CD8-positive, alpha-beta T cell (primary cell): ENCODE measurements at regions of chr7 and their contacts with region 1.

Region 1: DNA sequence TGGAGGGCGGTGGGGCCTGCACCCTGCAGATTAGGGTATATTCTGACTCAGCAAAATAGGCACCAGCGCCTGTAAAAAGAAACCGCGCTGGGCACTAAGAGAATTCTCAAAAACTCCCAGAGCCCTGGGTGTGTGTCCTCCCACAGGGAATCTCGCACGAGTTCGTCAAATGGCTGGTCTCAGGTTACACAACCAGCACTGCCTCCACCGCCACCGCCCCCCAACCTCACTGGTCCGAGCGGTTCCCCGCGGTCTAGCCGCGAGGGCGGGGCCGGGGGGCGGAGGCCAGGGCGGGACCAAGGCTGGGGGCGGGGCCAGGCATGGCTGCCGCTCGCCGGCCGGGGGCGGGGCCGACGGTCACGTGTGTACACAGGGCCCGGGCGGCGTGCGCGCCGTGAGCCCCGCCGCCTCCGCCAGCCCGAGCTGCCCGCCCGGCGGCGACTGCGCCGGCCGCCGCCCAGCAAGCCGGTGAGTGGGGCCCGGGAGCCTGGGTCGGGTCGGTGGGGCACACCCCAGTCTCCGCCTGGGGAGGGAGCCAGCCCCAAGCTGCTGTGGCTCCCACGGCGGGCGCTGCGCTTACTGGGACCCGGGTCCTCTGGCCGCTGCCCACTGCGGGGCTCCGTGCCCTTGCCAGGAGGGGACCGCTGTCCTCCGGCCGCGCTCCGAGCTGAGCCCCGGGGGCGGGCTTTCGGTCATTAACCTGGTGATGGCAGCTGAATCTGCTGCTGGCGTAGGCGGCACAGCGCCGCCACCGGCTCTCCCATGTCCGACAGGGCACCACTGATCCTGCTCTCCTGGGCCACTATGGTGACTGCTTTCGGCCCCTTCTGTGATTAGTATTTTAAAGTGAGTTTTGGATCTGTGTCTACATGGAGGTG is at the start of gene GPR146:
- DNase-seq: peak; percentile 76 to 97 (median 91)
- ATAC-seq: peak; percentile 88
- H3K4me3 ChIP-seq: peak within 1 kb of the TSS; percentile 57 to 71
- H3K4me3 Mint-ChIP-seq: peak within 1 kb of the TSS; percentile 84
- H3K27ac ChIP-seq: peak within 1 kb of the TSS; percentile 51 to 57
- H3K27ac Mint-ChIP-seq: peak within 1 kb of the TSS; percentile 52
- H3K4me1 ChIP-seq: peaks cover 53% of the 10 kb centered on the region
- H3K4me1 Mint-ChIP-seq: peaks cover 63% of the 10 kb centered on the region
- H3K27me3 ChIP-seq: no peaks in the 10 kb centered on the region
- H3K27me3 Mint-ChIP-seq: no peaks in the 10 kb centered on the region
- CTCF ChIP-seq: peak; percentile 60
- total RNA-seq, gene GPR146: 4.4 to 5.0 TPM

Region 2: DNA sequence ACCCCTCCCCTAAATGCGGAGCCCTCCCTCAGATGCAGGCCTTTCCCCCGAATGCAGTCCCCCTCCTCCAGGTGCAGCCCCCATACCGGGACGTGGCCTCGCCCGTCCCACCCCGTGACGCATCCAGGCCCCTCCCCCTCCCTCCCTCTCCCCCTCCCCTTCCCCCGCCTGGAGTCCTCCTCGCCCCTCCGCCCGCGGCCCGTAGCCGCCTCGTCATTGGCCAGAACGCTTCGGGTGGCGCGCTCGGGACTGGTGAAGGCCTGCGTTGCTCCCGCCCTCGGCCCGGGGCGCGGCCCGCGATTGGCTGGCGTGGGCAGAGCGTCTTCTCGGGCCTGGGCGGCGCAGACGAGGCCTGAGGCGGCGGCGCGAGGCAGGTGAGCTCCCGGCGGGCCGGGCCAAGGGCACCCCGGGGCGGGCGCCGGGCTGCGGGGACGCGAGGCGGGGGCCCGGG is 228.1 kb before region 1 on chr7:
- CTCF ChIA-PET with region 1: no interaction called
- POLR2A ChIA-PET with region 1: no interaction called
- intact Hi-C with region 1: loop called in 1 of 2 experiments (anchors 2 kb)
- DNase-seq: peak; percentile 93 to 98 (median 96)
- ATAC-seq: peak; percentile 94
- H3K4me3 ChIP-seq: peak overlapping the region; percentile 40 to 53
- H3K4me3 Mint-ChIP-seq: peak overlapping the region; percentile 61
- H3K27ac ChIP-seq: no peak overlapping the region
- H3K27ac Mint-ChIP-seq: no peak overlapping the region
- H3K4me1 ChIP-seq: peaks cover 34% of the 10 kb centered on the region
- H3K4me1 Mint-ChIP-seq: peaks cover 54% of the 10 kb centered on the region
- H3K27me3 ChIP-seq: no peaks in the 10 kb centered on the region
- H3K27me3 Mint-ChIP-seq: peaks cover 2% of the 10 kb centered on the region
- CTCF ChIP-seq: no peak

Region 3: DNA sequence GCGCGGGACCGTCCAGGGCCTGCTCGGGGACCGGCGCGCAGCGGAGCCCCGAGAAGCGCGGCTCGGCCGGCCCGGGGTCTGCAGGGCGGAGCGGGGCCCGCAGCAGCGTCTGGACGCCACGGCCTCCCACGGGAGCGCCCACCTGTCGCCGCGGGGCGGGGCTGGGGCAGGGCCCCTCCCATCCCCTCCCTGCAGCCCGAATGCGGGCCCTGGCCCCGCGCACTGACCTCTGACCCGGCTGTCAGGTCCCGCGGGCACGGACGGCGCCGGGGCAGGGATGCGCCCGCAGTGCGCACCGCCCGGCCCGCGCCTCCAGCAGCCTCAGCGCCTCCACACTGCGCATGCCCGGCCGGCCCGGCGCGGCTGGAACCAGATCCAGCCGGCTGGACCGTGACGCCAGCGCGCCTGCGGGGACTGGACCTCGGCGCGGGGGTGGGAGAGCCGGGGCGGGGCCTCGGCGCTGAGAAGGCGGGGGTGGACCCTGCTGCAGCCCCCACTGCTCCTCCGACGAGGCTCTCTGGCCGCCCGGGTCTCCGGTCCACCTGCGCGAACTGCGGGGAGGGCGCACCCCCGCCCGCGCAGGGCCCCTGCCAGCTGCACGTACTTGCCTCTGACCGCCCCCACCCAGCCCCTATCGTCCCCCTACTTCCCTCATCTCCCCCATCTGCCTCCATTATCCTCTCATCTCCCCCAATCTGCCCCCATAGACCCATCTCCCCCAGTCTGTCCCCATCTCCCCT is 16.2 kb before region 1 on chr7:
- CTCF ChIA-PET with region 1: interaction called, 6 read pairs
- POLR2A ChIA-PET with region 1: interaction called, 7 read pairs
- intact Hi-C with region 1: loop called (anchors 1 kb)
- DNase-seq: peak; percentile 67 to 90 (median 76)
- ATAC-seq: peak; percentile 72
- H3K4me3 ChIP-seq: peak overlapping the region; percentile 36 to 57
- H3K4me3 Mint-ChIP-seq: peak overlapping the region; percentile 82
- H3K27ac ChIP-seq: peak overlapping the region; percentile 48 to 81
- H3K27ac Mint-ChIP-seq: no peak overlapping the region
- H3K4me1 ChIP-seq: peaks cover 33% of the 10 kb centered on the region
- H3K4me1 Mint-ChIP-seq: peaks cover 34% of the 10 kb centered on the region
- H3K27me3 ChIP-seq: no peaks in the 10 kb centered on the region
- H3K27me3 Mint-ChIP-seq: no peaks in the 10 kb centered on the region
- CTCF ChIP-seq: no peak

Region 4: GRCh38 chr7:1059200-1060091 is 15.0 kb after region 1 on chr7:
- CTCF ChIA-PET with region 1: interaction called, 49 read pairs
- POLR2A ChIA-PET with region 1: interaction called, 10 read pairs
- intact Hi-C with region 1: no loop called
- DNase-seq: peak in 2 of 9 experiments; percentile 32 to 33
- ATAC-seq: peak; percentile 45
- H3K4me3 ChIP-seq: no peak overlapping the region
- H3K4me3 Mint-ChIP-seq: no peak overlapping the region
- H3K27ac ChIP-seq: no peak overlapping the region
- H3K27ac Mint-ChIP-seq: no peak overlapping the region
- H3K4me1 ChIP-seq: peaks cover 19% of the 10 kb centered on the region
- H3K4me1 Mint-ChIP-seq: peaks cover 15% of the 10 kb centered on the region
- H3K27me3 ChIP-seq: no peaks in the 10 kb centered on the region
- H3K27me3 Mint-ChIP-seq: no peaks in the 10 kb centered on the region
- CTCF ChIP-seq: no peak

Region 5: DNA sequence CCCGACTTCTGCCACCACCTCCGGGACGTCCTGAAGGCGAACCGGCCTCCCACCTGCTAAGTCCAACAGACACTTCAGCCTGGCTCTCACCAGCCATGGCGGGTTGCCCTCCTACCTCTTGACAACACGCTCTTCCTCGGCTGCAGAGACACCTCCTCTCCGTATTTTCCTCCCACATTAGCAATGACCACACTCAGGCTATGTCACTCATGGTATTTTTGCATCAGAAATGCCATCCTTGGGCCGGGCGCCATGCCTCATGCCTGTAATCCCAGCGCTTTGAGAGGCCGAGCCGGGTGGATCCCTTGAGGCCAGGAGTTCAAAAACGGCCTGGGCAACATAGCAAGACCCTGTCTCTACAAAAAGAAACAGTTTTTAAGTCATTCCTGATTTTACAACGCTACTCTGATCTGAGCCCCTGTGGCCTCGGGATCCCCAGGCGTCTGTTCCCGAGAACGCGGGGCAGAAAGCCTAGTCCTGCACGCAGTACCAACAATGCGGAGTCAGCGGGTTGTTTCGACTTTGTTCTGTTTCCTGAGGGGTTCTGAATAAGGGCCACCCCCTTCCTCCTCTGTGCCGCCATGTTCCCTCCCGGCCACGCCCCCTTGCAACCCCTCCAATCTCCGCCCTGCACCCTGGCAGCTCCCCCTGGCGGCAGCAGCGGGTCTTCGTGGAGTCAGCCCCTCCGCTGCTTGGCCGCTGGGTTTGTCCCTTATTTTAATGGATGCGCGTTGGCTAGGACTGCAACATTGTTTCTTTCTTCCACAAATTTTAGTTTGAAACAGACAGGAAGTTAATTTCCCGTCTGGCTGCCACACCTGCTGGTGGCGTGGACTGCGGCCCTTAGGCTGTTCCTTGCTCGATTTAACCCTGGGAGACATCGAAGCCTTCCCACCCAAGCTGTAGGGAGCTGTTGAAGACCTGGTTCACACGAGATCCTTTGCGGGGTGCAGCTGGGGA is 125.3 kb after region 1 on chr7:
- CTCF ChIA-PET with region 1: interaction called, 3 read pairs
- POLR2A ChIA-PET with region 1: no interaction called
- intact Hi-C with region 1: loop called in 1 of 2 experiments (anchors 5 kb)
- DNase-seq: peak; percentile 44 to 97 (median 93)
- ATAC-seq: peak; percentile 100
- H3K4me3 ChIP-seq: peak overlapping the region; percentile 42 to 50
- H3K4me3 Mint-ChIP-seq: peak overlapping the region; percentile 85
- H3K27ac ChIP-seq: peak overlapping the region; percentile 40 to 41
- H3K27ac Mint-ChIP-seq: peak overlapping the region; percentile 92
- H3K4me1 ChIP-seq: peaks cover 8% of the 10 kb centered on the region
- H3K4me1 Mint-ChIP-seq: peaks cover 12% of the 10 kb centered on the region
- H3K27me3 ChIP-seq: no peaks in the 10 kb centered on the region
- H3K27me3 Mint-ChIP-seq: no peaks in the 10 kb centered on the region
- CTCF ChIP-seq: peak; percentile 77